ENCODE measurements at regions of chr2 and their contacts with region 1.

Region 1: DNA sequence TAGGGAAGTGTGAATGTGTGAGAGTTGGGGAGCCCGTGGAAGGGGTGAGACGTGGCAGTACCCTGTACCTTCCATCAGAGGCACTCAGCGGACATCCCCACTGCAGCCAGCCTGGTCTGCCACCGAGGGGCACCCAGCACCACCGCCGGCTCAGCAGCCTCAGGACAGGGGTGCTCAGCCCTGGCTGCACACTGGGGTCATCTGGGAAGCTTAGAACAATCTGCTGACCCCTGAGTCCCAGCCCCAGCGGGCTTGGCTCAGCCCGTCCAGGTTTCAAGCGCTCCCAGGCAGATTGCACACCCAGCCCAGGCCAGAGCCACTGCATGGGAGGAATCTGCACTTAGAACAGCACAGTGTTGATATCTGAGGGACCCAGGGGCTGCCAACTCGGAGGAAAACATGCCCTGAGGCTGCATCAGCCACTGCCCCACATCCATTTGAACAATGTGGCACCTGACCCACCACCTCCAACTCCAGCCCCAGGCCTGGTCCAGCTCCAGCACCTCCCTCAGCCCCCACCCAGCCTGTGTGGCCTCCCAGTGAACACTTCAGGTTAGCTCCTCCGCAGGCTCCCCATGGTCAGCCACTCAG is 147.1 kb upstream of the OTOS start:
- DNase-seq: no peak

Region 2: GRCh38 chr2:239636808-239637207 is 650.8 kb before region 1 on chr2:
- intact Hi-C with region 1: loop called in 1 of 2 experiments (anchors 5 kb)
- DNase-seq: peak; percentile 24

Region 3: GRCh38 chr2:240217431-240218239 is 70.0 kb before region 1 on chr2:
- intact Hi-C with region 1: no loop called
- DNase-seq: peak; percentile 72